Pancreas (tissue), 10 donors: ENCODE measurements at regions of chr5 and their contacts with region 1.

Region 1: DNA sequence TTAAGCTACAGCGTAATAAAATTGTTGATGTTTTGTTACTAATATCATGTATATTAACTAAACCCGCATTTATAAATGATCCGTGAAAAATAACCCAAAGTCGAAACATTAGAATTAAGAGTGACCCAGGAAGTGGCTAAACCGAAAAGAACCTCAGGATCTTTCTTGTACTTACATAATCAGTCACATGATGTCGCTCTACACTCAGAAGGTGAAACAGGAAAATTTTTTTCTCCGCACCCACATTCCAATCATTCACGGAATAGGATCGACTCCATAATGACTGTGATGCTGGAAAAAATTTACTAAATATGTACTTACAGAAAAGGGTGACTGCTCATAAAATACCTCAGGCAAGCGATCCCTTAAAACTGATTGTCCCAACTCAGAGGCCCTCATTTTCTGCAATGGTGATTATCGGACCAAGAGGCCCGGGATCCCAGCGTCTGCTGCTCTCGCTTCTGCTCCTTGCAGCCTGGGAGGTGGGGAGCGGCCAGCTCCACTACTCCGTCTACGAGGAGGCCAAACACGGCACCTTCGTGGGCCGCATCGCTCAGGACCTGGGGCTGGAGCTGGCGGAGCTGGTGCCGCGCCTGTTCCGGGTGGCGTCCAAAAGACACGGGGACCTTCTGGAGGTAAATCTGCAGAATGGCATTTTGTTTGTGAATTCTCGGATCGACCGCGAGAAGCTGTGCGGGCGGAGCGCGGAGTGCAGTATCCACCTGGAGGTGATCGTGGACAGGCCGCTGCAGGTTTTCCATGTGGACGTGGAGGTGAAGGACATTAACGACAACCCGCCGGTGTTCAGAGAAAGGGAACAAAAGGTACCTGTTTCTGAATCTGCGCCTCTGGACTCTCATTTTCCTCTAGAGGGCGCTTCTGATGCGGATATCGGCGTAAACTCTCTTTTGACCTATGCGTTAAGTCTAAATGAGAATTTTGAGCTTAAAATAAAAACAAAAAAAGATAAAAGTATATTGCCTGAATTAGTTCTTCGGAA is at the start of gene PCDHA12:
- DNase-seq: peak in 1 of 6 donors; percentile 31
- ATAC-seq: peak; percentile 69 to 88 (median 76)
- H3K4me3 ChIP-seq: peak within 1 kb of the TSS in 2 of 4 donors; percentile 14 to 26
- H3K27ac ChIP-seq: no peak within 1 kb of the TSS
- H3K4me1 ChIP-seq: no peaks in the 10 kb centered on the region
- H3K27me3 ChIP-seq: no peaks in the 10 kb centered on the region
- CTCF ChIP-seq: no peak
- total RNA-seq, gene PCDHA12: 0.75 to 1.5 (median 1.3) TPM

Region 2: DNA sequence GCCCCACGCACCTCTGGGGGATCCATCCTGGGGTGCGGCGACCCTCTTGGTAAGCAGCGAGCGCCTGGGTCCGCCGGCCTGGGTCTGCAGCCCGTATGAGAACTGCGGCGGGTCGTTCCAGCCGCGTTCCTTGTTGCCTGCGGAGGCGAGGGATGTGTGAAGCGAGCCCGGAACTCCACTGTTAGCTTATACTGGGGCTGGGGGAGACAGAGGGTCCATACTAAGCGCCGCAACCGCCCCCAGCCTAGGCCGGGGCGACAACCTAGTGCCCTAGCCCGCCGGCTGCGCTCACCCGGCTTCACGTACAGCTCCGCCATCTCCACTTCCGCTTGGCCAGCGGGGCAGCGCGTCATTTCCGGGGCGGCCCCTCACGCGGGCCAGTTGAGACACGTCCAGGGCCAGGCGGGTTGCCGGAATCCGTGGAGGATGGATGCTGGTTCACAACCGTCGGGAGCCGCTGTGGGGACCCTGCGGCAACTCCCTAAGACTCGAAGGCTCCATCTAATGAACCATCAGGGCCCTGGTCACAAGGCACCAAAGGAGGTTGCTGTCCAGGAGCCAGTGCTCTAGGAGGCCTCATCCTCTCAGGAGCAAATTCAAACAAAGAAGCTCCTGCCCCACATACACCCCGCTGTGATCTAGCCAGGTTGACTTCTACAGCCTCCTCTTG is 318.1 kb before region 1 on chr5 and contains the start of gene SRA1:
- intact Hi-C with region 1: no loop called
- DNase-seq: peak; percentile 89 to 96 (median 92)
- ATAC-seq: peak; percentile 95 to 98 (median 98)
- H3K4me3 ChIP-seq: peak within 1 kb of the TSS; percentile 70 to 80 (median 74)
- H3K27ac ChIP-seq: peak within 1 kb of the TSS; percentile 70 to 82 (median 74)
- H3K4me1 ChIP-seq: peaks cover 5 to 19% (median 9%) of the 10 kb centered on the region in 3 donors
- H3K27me3 ChIP-seq: no peaks in the 10 kb centered on the region
- CTCF ChIP-seq: no peak
- total RNA-seq, gene SRA1: 7.0 to 14.3 (median 11.2) TPM

Region 3: DNA sequence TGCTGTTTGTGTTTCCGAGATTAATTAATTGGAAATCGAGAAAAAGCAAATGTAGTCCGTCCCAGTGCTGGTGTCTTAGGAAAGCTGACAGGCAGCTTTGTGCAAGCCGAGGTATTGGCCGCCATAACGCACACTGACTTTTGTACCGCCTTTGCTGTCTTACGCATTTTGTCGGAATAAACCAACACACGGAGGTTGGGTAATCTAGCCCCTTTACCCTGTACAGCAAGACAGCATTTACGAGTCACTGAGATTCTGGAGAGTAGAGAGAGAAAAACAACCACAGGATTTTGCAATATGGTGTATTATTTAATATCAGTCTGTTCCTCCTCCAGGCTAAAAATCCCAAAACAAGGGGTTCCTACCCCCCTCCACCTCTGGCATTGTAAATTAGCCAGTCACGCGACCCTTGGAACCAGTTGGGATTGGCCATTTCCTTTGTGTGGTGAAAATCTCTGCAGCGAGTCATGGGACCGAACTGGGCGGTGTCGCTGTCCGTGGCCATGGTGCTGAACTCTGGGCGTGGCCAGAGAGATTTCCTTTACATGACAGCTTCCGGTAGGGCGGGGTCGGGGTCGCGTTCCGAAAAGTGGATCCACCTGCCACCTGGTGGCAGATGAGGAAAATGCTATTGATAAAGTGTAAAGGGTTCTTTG is 165.5 kb after region 1 on chr5:
- intact Hi-C with region 1: loop called in 1 of 3 experiments (anchors 10 kb)
- DNase-seq: peak; percentile 95 to 98 (median 97)
- ATAC-seq: peak; percentile 91 to 97 (median 95)
- H3K4me3 ChIP-seq: peak overlapping the region; percentile 4 to 47 (median 27)
- H3K27ac ChIP-seq: peak overlapping the region; percentile 82 to 91 (median 86)
- H3K4me1 ChIP-seq: no peaks in the 10 kb centered on the region
- H3K27me3 ChIP-seq: peaks cover 0 to 14% (median 2%) of the 10 kb centered on the region in 4 donors
- CTCF ChIP-seq: peak; percentile 38 to 70 (median 64)